ENCODE measurements at regions of chr13 and their contacts with region 1.

Region 1: DNA sequence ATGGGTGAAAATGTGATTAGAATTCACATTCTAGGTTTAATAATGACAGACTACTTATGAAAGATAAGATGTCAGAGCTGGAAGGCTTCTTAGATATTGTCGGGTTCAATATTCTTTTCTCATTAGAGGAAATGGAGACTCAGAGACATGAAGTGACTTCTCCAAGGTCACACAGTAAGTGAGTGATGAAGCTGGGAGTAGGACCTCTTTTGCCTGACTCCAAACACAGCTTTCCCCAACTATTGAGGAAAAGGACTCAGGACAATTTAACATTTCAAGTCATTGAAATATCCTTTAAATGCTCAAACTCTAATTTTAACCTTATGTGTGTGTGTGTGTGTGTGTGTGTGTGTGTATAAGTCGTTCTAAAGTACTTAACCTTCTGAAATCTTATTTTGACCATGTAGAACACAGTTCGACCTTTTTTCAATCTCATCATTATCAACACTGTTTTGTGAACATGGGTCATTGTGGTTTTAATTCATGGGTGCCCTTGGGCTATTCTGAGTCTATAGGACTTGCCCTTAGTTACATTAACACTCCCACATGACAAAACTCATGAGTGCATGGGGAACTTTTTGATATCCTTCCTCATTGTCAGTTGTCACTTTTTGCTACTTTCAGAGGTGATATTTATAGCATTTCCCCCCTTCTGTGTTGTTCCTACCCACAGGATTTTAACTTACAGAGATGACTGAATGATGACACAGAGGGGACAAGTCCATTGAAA is 53.0 kb downstream of the LRCH1 start:
- DNase-seq: peak; percentile 72
- ATAC-seq: peak; percentile 44
- H3K4me3 ChIP-seq: peak overlapping the region in 1 of 5 experiments; percentile 18
- H3K4me3 Mint-ChIP-seq: peak overlapping the region; percentile 66
- H3K27ac ChIP-seq: peak overlapping the region; percentile 26 to 74
- H3K27ac Mint-ChIP-seq: peak overlapping the region; percentile 79
- H3K4me1 ChIP-seq: peaks cover 76 to 80% of the 10 kb centered on the region in 2 donors
- H3K4me1 Mint-ChIP-seq: peaks cover 89% of the 10 kb centered on the region
- H3K27me3 ChIP-seq: no peaks in the 10 kb centered on the region
- H3K27me3 Mint-ChIP-seq: no peaks in the 10 kb centered on the region
- CTCF ChIP-seq: no peak

Region 2: DNA sequence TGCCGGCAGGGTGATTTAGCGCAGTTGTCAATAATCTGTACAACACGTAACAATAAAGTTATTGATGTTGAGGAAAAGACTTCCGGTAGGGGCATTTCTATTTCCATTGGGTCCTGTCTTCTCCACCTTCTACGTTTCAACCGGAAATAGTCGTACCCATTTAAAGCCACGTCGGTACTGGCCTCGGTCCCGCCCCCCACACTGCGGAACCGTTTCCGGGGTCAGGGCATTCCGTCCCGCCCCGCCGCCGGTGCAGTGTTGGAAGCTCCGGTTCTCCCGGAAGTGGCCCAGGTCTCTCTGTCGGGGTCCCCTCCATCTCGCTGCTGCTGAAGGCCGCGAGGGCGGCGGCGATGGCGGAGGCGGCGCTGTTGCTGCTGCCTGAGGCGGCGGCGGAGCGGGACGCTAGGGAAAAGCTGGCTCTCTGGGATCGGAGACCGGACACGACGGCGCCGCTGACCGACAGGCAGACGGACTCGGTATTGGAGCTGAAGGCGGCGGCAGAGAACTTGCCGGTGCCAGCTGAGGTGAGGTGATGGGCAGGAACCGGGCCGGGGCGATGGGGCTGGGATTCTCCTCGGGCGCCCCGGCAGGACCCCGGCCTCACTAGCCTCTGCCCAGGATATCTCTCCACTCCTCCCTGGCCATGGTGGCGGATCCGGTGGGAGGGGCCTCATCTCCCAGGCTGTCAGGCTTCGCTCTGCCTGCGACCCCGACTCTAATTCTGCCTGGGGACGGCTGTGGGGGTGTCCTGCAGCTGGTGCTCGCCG is 1141.1 kb before region 1 on chr13 and contains the start of gene COG3:
- CTCF ChIA-PET with region 1: no interaction called
- POLR2A ChIA-PET with region 1: no interaction called
- intact Hi-C with region 1: no loop called
- DNase-seq: peak; percentile 96
- ATAC-seq: peak; percentile 96
- H3K4me3 ChIP-seq: peak within 1 kb of the TSS; percentile 74 to 96 (median 88)
- H3K4me3 Mint-ChIP-seq: peak within 1 kb of the TSS; percentile 91
- H3K27ac ChIP-seq: peak within 1 kb of the TSS; percentile 78 to 83
- H3K27ac Mint-ChIP-seq: peak within 1 kb of the TSS; percentile 91
- H3K4me1 ChIP-seq: peaks cover 12 to 21% of the 10 kb centered on the region in 2 donors
- H3K4me1 Mint-ChIP-seq: peaks cover 38% of the 10 kb centered on the region
- H3K27me3 ChIP-seq: no peaks in the 10 kb centered on the region
- H3K27me3 Mint-ChIP-seq: no peaks in the 10 kb centered on the region
- CTCF ChIP-seq: peak; percentile 56
- total RNA-seq, gene COG3: 37.3 and 41.5 TPM in 2 replicates

Region 3: DNA sequence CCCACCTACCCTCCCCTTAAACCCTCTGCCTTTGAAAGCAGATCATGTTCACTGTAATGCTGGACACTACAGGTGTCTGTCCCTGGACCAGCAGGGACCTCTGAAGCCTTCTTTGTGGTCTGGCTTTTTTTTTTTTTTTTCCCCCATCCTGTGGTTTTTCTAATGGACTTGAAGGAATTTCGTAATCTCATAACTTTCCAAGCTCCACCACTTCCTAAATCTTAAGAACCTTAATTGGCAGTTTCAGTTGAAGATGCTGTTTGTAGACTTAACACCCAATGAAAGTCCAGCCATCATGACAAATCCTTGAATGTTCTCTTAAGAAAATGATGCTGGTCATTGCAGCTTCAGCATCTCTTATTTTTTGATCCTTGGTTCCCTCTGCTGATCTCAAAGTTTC is 98.0 kb before region 1 on chr13:
- CTCF ChIA-PET with region 1: no interaction called
- POLR2A ChIA-PET with region 1: no interaction called
- intact Hi-C with region 1: no loop called
- DNase-seq: no peak
- ATAC-seq: no peak
- H3K4me3 ChIP-seq: no peak overlapping the region
- H3K4me3 Mint-ChIP-seq: no peak overlapping the region
- H3K27ac ChIP-seq: no peak overlapping the region
- H3K27ac Mint-ChIP-seq: no peak overlapping the region
- H3K4me1 ChIP-seq: no peaks in the 10 kb centered on the region
- H3K4me1 Mint-ChIP-seq: peaks cover 2% of the 10 kb centered on the region
- H3K27me3 ChIP-seq: no peaks in the 10 kb centered on the region
- H3K27me3 Mint-ChIP-seq: peaks cover 3% of the 10 kb centered on the region
- CTCF ChIP-seq: no peak

Region 4: GRCh38 chr13:46622630-46623256 is 16.8 kb after region 1 on chr13:
- CTCF ChIA-PET with region 1: interaction called, 16 read pairs
- POLR2A ChIA-PET with region 1: interaction called, 5 read pairs
- intact Hi-C with region 1: loop called (anchors 2 kb)
- DNase-seq: no peak
- ATAC-seq: no peak
- H3K4me3 ChIP-seq: no peak overlapping the region
- H3K4me3 Mint-ChIP-seq: peak overlapping the region; percentile 35
- H3K27ac ChIP-seq: no peak overlapping the region
- H3K27ac Mint-ChIP-seq: no peak overlapping the region
- H3K4me1 ChIP-seq: peaks cover 74 to 75% of the 10 kb centered on the region in 2 donors
- H3K4me1 Mint-ChIP-seq: peaks cover 92% of the 10 kb centered on the region
- H3K27me3 ChIP-seq: no peaks in the 10 kb centered on the region
- H3K27me3 Mint-ChIP-seq: no peaks in the 10 kb centered on the region
- CTCF ChIP-seq: no peak

Region 5: DNA sequence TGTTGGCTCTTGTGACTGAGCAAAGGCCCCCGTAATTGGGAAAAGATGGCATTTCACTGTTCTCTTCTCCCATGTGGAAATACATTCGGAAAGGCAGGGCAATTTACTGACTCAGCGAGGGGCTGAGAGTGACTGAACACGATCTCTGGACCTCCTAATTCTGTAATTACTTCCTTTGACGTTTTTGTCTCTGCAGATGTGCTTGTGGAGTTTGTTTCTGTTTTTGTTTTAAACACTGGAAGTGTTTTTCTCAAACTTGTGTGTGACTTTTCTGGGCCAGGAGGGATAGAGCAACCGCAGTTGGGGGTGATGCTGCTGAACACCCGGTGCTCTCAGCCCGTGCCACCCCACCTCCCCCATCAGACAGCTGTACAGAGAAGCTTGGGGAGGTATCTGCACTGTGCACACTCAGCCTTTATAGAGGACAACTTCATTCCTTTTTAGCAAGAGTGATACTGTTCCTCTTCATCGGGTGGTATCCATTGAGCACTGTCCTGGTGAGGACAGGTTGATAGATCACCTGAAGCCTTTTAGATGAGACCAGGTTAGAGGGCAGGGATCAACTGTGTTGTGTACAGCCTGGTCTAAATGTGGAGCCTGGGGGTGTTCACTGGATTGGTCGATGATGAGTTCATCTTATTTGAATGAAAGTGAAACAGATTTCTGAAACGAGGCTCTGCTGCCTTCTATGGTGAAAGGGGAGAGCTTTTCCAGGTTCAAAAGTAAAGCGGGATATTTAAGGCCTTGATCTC is 73.6 kb after region 1 on chr13:
- CTCF ChIA-PET with region 1: no interaction called
- POLR2A ChIA-PET with region 1: interaction called, 4 read pairs
- intact Hi-C with region 1: loop called (anchors 2 kb)
- DNase-seq: peak; percentile 78
- ATAC-seq: peak; percentile 89
- H3K4me3 ChIP-seq: peak overlapping the region in 4 of 5 experiments; percentile 23 to 63 (median 44)
- H3K4me3 Mint-ChIP-seq: no peak overlapping the region
- H3K27ac ChIP-seq: peak overlapping the region; percentile 79 to 81
- H3K27ac Mint-ChIP-seq: no peak overlapping the region
- H3K4me1 ChIP-seq: peaks cover 23 to 27% of the 10 kb centered on the region in 2 donors
- H3K4me1 Mint-ChIP-seq: peaks cover 26% of the 10 kb centered on the region
- H3K27me3 ChIP-seq: no peaks in the 10 kb centered on the region
- H3K27me3 Mint-ChIP-seq: no peaks in the 10 kb centered on the region
- CTCF ChIP-seq: peak; percentile 43